ENCODE measurements at regions of chr1 and their contacts with region 1.

Region 1: GRCh38 chr1:175023043-175023921 is at the start of gene MRPS14:
- DNase-seq: peak; percentile 94 to 99 (median 97)
- ATAC-seq: peak; percentile 92 to 93
- H3K4me3 Mint-ChIP-seq: peak within 1 kb of the TSS; percentile 87 to 98 (median 92)
- H3K27ac Mint-ChIP-seq: peak within 1 kb of the TSS; percentile 92 to 100 (median 96)
- H3K4me1 Mint-ChIP-seq: peaks cover 24 to 39% (median 32%) of the 10 kb centered on the region in 4 donors
- H3K27me3 Mint-ChIP-seq: no peaks in the 10 kb centered on the region
- polyA plus RNA-seq, gene MRPS14: 44.8 to 55.4 (median 45.7) TPM

Region 2: GRCh38 chr1:174800216-174800851 is 222.9 kb before region 1 on chr1:
- POLR2A ChIA-PET with region 1: interaction called, 16 read pairs
- DNase-seq: peak in 3 of 10 donors; percentile 3 to 19 (median 4)
- ATAC-seq: peak; percentile 4 to 15
- H3K4me3 Mint-ChIP-seq: no peak overlapping the region
- H3K27ac Mint-ChIP-seq: no peak overlapping the region
- H3K4me1 Mint-ChIP-seq: peaks cover 3 to 20% (median 8%) of the 10 kb centered on the region in 4 donors
- H3K27me3 Mint-ChIP-seq: no peaks in the 10 kb centered on the region

Region 3: DNA sequence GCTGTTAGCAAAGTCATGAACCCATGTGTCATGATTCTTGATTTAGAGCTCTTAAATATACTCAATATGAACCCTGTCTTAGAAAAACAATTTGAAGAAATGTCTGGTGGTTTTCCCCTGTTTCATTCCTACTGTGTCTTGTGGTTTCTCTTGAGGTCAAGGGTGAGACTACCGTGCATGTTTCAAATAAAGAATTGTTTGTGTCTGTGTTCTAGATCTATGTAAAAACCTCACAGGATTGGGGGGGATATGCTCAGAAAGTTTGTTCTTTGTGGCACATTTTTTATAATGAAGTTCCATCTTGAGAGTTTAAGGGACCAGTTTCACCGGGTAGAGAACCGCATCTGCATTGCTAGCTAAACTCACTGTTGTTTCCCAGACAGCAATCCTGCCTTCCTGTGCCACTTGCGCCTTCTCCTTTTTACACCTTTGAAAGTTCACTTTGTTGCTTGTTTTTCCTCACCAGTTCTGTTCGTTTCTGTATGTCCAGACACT is 54.5 kb before region 1 on chr1:
- POLR2A ChIA-PET with region 1: interaction called, 17 read pairs
- DNase-seq: peak in 8 of 10 donors; percentile 32 to 89 (median 66)
- ATAC-seq: peak; percentile 65 to 73
- H3K4me3 Mint-ChIP-seq: peak overlapping the region; percentile 57 to 79 (median 69)
- H3K27ac Mint-ChIP-seq: peak overlapping the region; percentile 90 to 98 (median 95)
- H3K4me1 Mint-ChIP-seq: peaks cover 35 to 81% (median 74%) of the 10 kb centered on the region in 4 donors
- H3K27me3 Mint-ChIP-seq: no peaks in the 10 kb centered on the region

Region 4: DNA sequence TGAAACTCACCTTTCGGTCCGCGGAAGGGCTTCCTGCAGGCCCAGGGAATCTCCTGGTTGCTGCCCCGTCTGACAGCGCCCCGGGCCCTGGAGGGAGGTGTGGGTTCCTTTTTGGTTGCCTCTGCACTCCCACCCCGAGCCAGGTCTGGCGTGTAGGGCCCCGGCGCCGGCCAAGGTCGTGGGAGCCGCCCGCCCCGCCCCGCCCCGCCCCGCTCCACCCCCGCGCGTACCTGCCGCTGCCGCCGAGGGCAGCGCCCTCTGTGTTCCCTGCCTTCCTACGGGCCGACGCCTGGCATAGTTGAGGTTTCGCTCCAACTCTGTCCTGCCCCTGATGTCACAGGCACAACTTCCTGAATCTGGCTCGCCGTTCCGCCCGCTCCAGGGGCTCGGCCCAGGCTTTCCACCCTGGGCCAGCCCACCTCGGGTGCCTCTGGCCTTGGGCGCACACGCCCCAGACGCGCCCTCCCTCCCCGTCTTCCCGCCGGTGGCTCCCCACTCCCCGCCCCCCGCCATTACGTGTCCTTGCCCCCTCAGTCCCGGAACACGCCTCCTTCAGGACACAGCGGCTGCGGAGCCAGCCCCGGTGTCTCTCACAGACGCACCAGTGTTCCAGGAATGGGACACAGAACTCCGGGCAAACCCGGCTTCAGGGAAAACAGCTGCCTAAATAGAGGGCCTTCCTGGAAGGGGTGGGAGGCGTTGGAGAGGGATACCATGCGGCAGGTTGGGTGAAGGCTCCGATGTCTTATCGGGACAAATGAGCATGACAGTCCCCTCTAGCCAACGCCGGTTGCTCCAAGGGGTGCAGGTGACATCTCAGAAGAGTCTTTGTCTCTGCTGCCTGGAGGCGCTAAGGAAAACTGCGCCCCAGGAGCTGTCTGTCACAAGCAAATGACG is 169.6 kb after region 1 on chr1 and contains the start of gene KIAA0040:
- POLR2A ChIA-PET with region 1: interaction called, 11 read pairs
- DNase-seq: peak; percentile 5 to 68 (median 53)
- ATAC-seq: peak; percentile 61 to 70
- H3K4me3 Mint-ChIP-seq: peak within 1 kb of the TSS; percentile 95 to 99 (median 98)
- H3K27ac Mint-ChIP-seq: peak within 1 kb of the TSS; percentile 90 to 97 (median 94)
- H3K4me1 Mint-ChIP-seq: peaks cover 29 to 82% (median 50%) of the 10 kb centered on the region in 4 donors
- H3K27me3 Mint-ChIP-seq: no peaks in the 10 kb centered on the region
- polyA plus RNA-seq, gene KIAA0040: 26.0 to 32.5 (median 28.9) TPM

Measured in naive thymus-derived CD8-positive, alpha-beta T cell (primary cell).